Activated CD8-positive, alpha-beta memory T cell treated with anti-CD3 and anti-CD28 coated beads, Interleukin-2, amount 10 ng/mL, durations not matched to agents 7 days and 5 days (primary cell): ENCODE measurements at regions of chr19 and their contacts with region 1.

Region 1: DNA sequence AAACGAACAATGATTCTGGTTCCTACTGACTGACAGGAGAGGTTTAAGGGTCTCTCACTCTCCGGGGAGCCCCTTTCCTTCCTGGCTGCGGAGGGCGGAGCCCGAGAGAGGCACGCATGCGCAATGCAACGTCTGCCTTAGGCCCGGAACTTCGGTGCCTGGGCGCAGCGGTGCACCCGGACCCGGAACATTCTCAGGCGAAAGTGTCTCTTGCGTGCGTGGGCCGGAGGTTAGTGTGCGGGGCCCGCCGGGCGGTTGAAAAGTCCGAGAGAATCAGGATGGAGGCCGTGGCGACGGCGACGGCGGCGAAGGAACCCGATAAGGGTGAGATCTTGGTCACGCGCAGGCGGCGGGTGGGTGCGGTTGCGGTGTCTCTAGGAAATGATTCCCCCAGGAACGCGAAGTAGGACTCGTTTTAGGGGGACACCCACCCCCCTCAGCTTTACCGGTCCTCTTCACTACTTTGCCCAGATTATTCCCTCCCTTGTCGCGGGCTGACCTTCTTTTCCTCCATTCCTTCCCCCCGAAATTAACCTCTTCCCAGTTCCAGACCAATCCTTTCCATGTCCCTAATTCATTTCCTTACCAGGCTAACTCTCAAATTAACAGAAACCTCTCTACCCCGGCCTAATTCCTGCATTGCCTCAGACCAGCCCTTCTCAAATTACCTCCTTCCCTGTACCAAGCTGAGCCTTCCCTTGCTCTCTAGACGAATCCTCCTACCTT is at the start of gene CCDC97:
- DNase-seq: peak; percentile 93
- ATAC-seq: peak; percentile 72
- H3K4me3 Mint-ChIP-seq: peak within 1 kb of the TSS; percentile 95
- H3K27ac Mint-ChIP-seq: peak within 1 kb of the TSS; percentile 94
- H3K4me1 Mint-ChIP-seq: peaks cover 69% of the 10 kb centered on the region
- H3K27me3 Mint-ChIP-seq: no peaks in the 10 kb centered on the region
- total RNA-seq, gene CCDC97: 42.9 to 43.5 TPM

Region 2: GRCh38 chr19:41206926-41207750 is 103.1 kb before region 1 on chr19:
- CTCF ChIA-PET with region 1: interaction called, 19 read pairs
- DNase-seq: no peak
- ATAC-seq: no peak
- H3K4me3 Mint-ChIP-seq: no peak overlapping the region
- H3K27ac Mint-ChIP-seq: no peak overlapping the region
- H3K4me1 Mint-ChIP-seq: peaks cover 11% of the 10 kb centered on the region
- H3K27me3 Mint-ChIP-seq: peaks cover 2% of the 10 kb centered on the region

Region 3: GRCh38 chr19:41263850-41264580 is 46.2 kb before region 1 on chr19 and contains the start of gene HNRNPUL1:
- CTCF ChIA-PET with region 1: interaction called, 110 read pairs
- DNase-seq: peak; percentile 99
- ATAC-seq: peak; percentile 68
- H3K4me3 Mint-ChIP-seq: peak within 1 kb of the TSS; percentile 79
- H3K27ac Mint-ChIP-seq: peak within 1 kb of the TSS; percentile 99
- H3K4me1 Mint-ChIP-seq: peaks cover 36% of the 10 kb centered on the region
- H3K27me3 Mint-ChIP-seq: no peaks in the 10 kb centered on the region
- total RNA-seq, gene HNRNPUL1: 342 to 348 TPM

Region 4: GRCh38 chr19:41298348-41298964 is 11.7 kb before region 1 on chr19:
- CTCF ChIA-PET with region 1: interaction called, 28 read pairs
- DNase-seq: peak; percentile 65
- ATAC-seq: peak; percentile 17
- H3K4me3 Mint-ChIP-seq: no peak overlapping the region
- H3K27ac Mint-ChIP-seq: peak overlapping the region; percentile 82
- H3K4me1 Mint-ChIP-seq: peaks cover 94% of the 10 kb centered on the region
- H3K27me3 Mint-ChIP-seq: no peaks in the 10 kb centered on the region

Region 5: GRCh38 chr19:41327576-41328156 is 17.5 kb after region 1 on chr19:
- CTCF ChIA-PET with region 1: interaction called, 32 read pairs
- DNase-seq: peak; percentile 90
- ATAC-seq: peak; percentile 73
- H3K4me3 Mint-ChIP-seq: peak overlapping the region; percentile 67
- H3K27ac Mint-ChIP-seq: peak overlapping the region; percentile 91
- H3K4me1 Mint-ChIP-seq: peaks cover 61% of the 10 kb centered on the region
- H3K27me3 Mint-ChIP-seq: no peaks in the 10 kb centered on the region

Region 6: GRCh38 chr19:41363753-41364523 is 53.7 kb after region 1 on chr19 and contains the start of gene B9D2:
- CTCF ChIA-PET with region 1: interaction called, 18 read pairs
- DNase-seq: peak; percentile 99
- ATAC-seq: peak; percentile 95
- H3K4me3 Mint-ChIP-seq: peak within 1 kb of the TSS; percentile 90
- H3K27ac Mint-ChIP-seq: peak within 1 kb of the TSS; percentile 95
- H3K4me1 Mint-ChIP-seq: peaks cover 27% of the 10 kb centered on the region
- H3K27me3 Mint-ChIP-seq: no peaks in the 10 kb centered on the region
- total RNA-seq, gene B9D2: 8.2 to 9.3 TPM

Region 7: GRCh38 chr19:41397086-41398049 is 87.2 kb after region 1 on chr19 and contains the starts of genes BCKDHA and EXOSC5:
- CTCF ChIA-PET with region 1: no interaction called
- DNase-seq: peak; percentile 100
- ATAC-seq: peak; percentile 98
- H3K4me3 Mint-ChIP-seq: peak within 1 kb of the TSS; percentile 97
- H3K27ac Mint-ChIP-seq: peak within 1 kb of the TSS; percentile 97
- H3K4me1 Mint-ChIP-seq: peaks cover 37% of the 10 kb centered on the region
- H3K27me3 Mint-ChIP-seq: no peaks in the 10 kb centered on the region
- total RNA-seq, gene BCKDHA: 18.7 to 20.1 TPM
- total RNA-seq, gene EXOSC5: 24.4 to 36.0 TPM